ENCODE measurements at regions of chr2 and their contacts with region 1.

Region 1: GRCh38 chr2:56483081-56483480 is 299.3 kb downstream of the CCDC85A start:
- DNase-seq: no peak
- H3K4me3 ChIP-seq: no peak overlapping the region
- H3K27ac ChIP-seq: no peak overlapping the region
- H3K4me1 ChIP-seq: no peaks in the 10 kb centered on the region
- H3K27me3 ChIP-seq: no peaks in the 10 kb centered on the region
- CTCF ChIP-seq: no peak
- POLR2A ChIP-seq: no peak

Region 2: GRCh38 chr2:56522605-56523089 is 39.6 kb after region 1 on chr2:
- intact Hi-C with region 1: loop called (anchors 5 kb)
- DNase-seq: no peak
- H3K4me3 ChIP-seq: no peak overlapping the region
- H3K27ac ChIP-seq: no peak overlapping the region
- H3K4me1 ChIP-seq: no peaks in the 10 kb centered on the region
- H3K27me3 ChIP-seq: no peaks in the 10 kb centered on the region
- CTCF ChIP-seq: no peak
- POLR2A ChIP-seq: no peak

Region 3: DNA sequence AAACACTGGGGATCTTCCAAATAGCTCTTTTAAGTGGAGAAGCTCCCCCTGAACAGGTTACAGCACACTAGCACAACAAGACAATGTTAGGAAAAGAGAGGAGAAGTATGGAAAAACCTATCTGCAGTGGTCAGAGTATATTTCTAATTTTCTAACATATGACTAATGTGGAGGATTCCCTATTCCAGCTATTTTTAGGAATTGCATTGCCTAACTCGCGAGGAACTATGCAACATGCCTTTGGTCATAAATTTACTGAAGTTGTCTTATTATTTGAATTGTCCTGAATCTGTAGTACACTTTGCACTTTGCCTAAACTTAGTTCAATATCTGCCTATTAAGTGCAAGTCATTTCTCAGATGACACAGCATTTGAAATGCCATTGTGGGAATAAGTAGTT is 82.1 kb after region 1 on chr2:
- intact Hi-C with region 1: no loop called
- DNase-seq: no peak
- H3K4me3 ChIP-seq: no peak overlapping the region
- H3K27ac ChIP-seq: no peak overlapping the region
- H3K4me1 ChIP-seq: no peaks in the 10 kb centered on the region
- H3K27me3 ChIP-seq: no peaks in the 10 kb centered on the region
- CTCF ChIP-seq: no peak
- POLR2A ChIP-seq: no peak